A549 (cell line): ENCODE measurements at regions of chr7 and their contacts with region 1.

Region 1: DNA sequence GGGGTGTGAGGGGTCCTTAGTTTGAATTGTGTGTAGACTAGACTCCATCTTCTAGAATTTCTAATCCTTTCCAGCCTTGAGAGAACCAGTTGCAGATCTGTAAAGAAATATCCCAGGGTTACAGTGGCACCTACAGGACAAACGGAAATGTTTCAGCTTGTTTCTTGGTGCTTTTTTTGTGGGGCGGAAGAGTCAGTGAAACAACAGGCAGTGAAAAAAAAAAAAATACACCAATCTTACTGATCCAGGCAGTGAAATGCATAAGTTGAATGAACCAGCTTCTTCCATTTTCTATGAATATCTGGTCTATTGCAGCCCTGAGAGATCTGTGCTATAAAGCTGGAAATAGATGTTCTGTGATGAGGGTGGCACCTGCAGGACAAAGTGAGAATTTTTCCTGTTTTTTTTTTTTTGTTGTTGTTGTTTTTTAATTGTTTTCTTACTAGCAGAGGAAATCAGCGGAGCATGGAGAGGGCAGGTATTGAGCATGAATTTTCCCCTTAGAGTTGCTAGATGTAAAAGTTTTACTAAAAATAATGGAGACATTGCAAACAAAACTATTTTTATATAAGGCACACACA is 81.9 kb upstream of the DYNC1I1 start:
- DNase-seq: peak; percentile 6 to 73
- ATAC-seq: peak; percentile 74 to 79
- H3K4me3 ChIP-seq: peak overlapping the region; percentile 12; the same call in 1 of the 3 replicates
- H3K27ac ChIP-seq: peak overlapping the region; percentile 27 to 53; a peak in 3 of 6 replicates
- H3K4me1 ChIP-seq: peaks cover 23% of the 10 kb centered on the region; the same call in 2 of the 3 replicates
- CTCF ChIP-seq: peak; percentile 99
- EP300 ChIP-seq: no peak
- POLR2A ChIP-seq: no peak
- RAD21 ChIP-seq: peak; percentile 62 to 87

Region 2: GRCh38 chr7:94289071-94289470 is 1401.4 kb before region 1 on chr7:
- CTCF ChIA-PET with region 1: interaction called, 19 read pairs
- POLR2A ChIA-PET with region 1: no interaction called
- DNase-seq: peak; percentile 64 to 86
- ATAC-seq: peak; percentile 94 to 99
- H3K4me3 ChIP-seq: no peak overlapping the region
- H3K27ac ChIP-seq: 0 out of 6 replicates have a peak overlapping the region, but pooled peaks of 1 of the 2 experiments have one; percentile 17
- H3K4me1 ChIP-seq: 0 out of 3 replicates have a peak, but pooled peaks cover 5% of the 10 kb centered on the region
- CTCF ChIP-seq: peak; percentile 91
- EP300 ChIP-seq: no peak
- POLR2A ChIP-seq: no peak
- RAD21 ChIP-seq: peak; percentile 93 to 100

Region 3: DNA sequence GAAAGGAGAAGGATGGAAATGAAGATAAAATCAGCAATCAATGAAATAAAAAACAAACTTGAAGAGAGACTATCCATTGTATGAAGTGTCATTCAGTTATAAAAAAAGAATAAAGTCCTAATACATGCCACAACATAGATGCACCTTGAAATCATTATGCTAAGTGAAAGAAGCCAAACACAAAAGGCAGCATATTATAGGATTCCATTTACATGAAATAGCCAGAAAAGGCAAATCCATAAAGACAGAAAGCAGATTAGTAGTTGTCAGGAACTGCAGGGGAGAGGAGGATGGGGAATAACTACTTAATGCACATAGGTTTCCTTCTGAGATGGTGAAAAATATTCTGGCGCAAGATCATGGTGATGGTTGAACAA is 359.5 kb before region 1 on chr7:
- CTCF ChIA-PET with region 1: no interaction called
- POLR2A ChIA-PET with region 1: no interaction called
- DNase-seq: no peak
- ATAC-seq: no peak; a peak in 1 of 6 replicates
- H3K4me3 ChIP-seq: peak overlapping the region; percentile 32
- H3K27ac ChIP-seq: peak overlapping the region; percentile 50 to 63
- H3K4me1 ChIP-seq: peaks cover 31% of the 10 kb centered on the region
- CTCF ChIP-seq: no peak
- EP300 ChIP-seq: no peak
- POLR2A ChIP-seq: no peak
- RAD21 ChIP-seq: no peak

Region 4: DNA sequence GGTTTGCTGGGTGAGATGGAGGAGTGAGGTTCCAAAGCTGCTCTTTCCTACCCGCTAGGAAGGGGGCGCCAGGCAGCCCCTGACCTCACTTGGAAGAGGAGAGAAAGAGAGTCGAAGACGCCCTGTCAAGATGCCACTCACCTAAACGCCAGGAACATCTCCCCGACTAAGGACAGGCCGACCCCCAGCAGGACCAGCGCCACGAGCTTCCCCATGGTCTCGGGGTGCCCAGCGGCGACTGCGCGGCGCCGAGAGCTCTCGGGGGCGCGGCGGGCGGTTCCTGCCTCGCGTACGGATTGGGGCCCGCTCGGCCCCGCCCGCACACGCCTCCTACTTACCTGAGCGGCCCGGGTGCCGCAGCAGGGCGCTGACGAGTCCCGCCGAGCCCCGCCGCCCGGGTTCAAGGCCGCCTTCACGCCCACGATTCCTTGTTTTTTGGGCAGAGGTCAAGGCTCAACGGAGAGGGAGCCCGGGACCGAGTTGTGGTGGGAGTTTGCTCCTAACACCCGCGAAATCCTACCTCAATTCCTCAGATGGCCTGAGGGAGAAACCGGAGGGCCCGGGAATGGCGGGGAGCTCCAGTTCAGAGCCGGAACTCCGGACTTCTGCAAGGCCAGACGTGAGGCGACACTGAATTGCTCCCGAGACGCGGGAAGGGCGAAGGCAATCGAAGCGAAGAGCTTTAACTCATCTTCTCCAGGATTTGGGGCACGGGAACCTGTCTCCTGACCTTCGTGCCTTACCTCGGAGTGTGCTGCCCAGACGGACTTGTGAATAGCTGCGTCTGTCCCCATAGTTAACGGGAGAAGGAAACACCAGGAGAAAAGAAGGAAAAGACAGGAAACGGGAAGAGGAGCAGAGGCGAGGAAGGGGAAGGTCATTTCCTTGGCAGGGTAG is 294.1 kb before region 1 on chr7 and contains the start of gene PON3:
- CTCF ChIA-PET with region 1: interaction called, 16 read pairs
- POLR2A ChIA-PET with region 1: no interaction called
- DNase-seq: peak; percentile 89 to 91
- ATAC-seq: peak; percentile 89 to 90
- H3K4me3 ChIP-seq: peak within 1 kb of the TSS; percentile 62
- H3K27ac ChIP-seq: peak within 1 kb of the TSS; percentile 90 to 97
- H3K4me1 ChIP-seq: peaks cover 56% of the 10 kb centered on the region
- CTCF ChIP-seq: peak; percentile 83
- EP300 ChIP-seq: no peak
- POLR2A ChIP-seq: peak; percentile 36; the same call in 1 of the 2 replicates
- RAD21 ChIP-seq: peak; percentile 65 to 68
- polyA plus RNA-seq, gene PON3: 142 and 161 TPM in 2 replicates

Region 5: GRCh38 chr7:95511716-95512260 is 178.7 kb before region 1 on chr7:
- CTCF ChIA-PET with region 1: interaction called, 201 read pairs
- POLR2A ChIA-PET with region 1: interaction called, 5 read pairs
- DNase-seq: peak; percentile 53 to 85
- ATAC-seq: peak; percentile 94 to 99
- H3K4me3 ChIP-seq: no peak overlapping the region
- H3K27ac ChIP-seq: peak overlapping the region; percentile 54 to 74
- H3K4me1 ChIP-seq: peaks cover 5% of the 10 kb centered on the region; the same call in 1 of the 3 replicates
- CTCF ChIP-seq: peak; percentile 80
- EP300 ChIP-seq: no peak
- POLR2A ChIP-seq: no peak
- RAD21 ChIP-seq: peak; percentile 73 to 77

Region 6: GRCh38 chr7:95558864-95559263 is 131.6 kb before region 1 on chr7:
- CTCF ChIA-PET with region 1: interaction called, 10 read pairs
- POLR2A ChIA-PET with region 1: no interaction called
- DNase-seq: no peak
- ATAC-seq: no peak
- H3K4me3 ChIP-seq: no peak overlapping the region
- H3K27ac ChIP-seq: no peak overlapping the region
- H3K4me1 ChIP-seq: no peaks in the 10 kb centered on the region
- CTCF ChIP-seq: no peak
- EP300 ChIP-seq: no peak
- POLR2A ChIP-seq: no peak
- RAD21 ChIP-seq: no peak

Region 7: GRCh38 chr7:95700917-95701316 is 10.5 kb after region 1 on chr7:
- CTCF ChIA-PET with region 1: interaction called, 15 read pairs
- POLR2A ChIA-PET with region 1: no interaction called
- DNase-seq: no peak
- ATAC-seq: no peak
- H3K4me3 ChIP-seq: no peak overlapping the region
- H3K27ac ChIP-seq: no peak overlapping the region
- H3K4me1 ChIP-seq: no peaks in the 10 kb centered on the region
- CTCF ChIP-seq: no peak
- EP300 ChIP-seq: no peak
- POLR2A ChIP-seq: no peak
- RAD21 ChIP-seq: no peak